PC-9 (cell line): ENCODE measurements at regions of chr11 and their contacts with region 1.

Region 1: GRCh38 chr11:128157423-128158298 is 429.7 kb downstream of the ETS1 start:
- DNase-seq: peak; percentile 50 to 58
- H3K4me3 ChIP-seq: peak overlapping the region; percentile 49; the same call in 1 of the 2 replicates
- H3K27ac ChIP-seq: no peak overlapping the region
- H3K4me1 ChIP-seq: no peaks in the 10 kb centered on the region
- H3K27me3 ChIP-seq: no peaks in the 10 kb centered on the region
- CTCF ChIP-seq: peak; percentile 99

Region 2: DNA sequence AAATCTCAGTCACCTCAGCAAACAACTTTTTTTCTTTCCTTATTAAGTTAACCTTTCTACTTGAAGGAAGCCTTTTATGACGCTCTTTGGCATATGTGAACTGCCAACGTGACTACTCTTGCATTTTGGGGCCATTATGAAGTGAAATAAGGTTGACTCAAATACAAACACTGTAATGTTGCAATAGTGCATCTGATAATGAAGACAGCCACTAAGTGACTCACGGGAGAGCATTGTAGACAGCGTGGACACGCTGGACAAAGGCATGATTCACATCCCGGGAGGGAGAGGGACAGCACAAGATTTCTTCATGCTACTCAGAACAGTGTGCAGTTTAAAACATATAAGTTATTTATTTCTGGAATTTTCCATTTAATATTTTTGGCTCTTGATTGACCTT is 131.1 kb before region 1 on chr11:
- CTCF ChIA-PET with region 1: no interaction called
- POLR2A ChIA-PET with region 1: no interaction called
- intact Hi-C with region 1: loop called (anchors 1 kb)
- DNase-seq: peak; percentile 57 to 83
- H3K4me3 ChIP-seq: no peak overlapping the region
- H3K27ac ChIP-seq: no peak overlapping the region
- H3K4me1 ChIP-seq: peaks cover 8% of the 10 kb centered on the region; the same call in 1 of the 2 replicates
- H3K27me3 ChIP-seq: no peaks in the 10 kb centered on the region
- CTCF ChIP-seq: no peak

Region 3: DNA sequence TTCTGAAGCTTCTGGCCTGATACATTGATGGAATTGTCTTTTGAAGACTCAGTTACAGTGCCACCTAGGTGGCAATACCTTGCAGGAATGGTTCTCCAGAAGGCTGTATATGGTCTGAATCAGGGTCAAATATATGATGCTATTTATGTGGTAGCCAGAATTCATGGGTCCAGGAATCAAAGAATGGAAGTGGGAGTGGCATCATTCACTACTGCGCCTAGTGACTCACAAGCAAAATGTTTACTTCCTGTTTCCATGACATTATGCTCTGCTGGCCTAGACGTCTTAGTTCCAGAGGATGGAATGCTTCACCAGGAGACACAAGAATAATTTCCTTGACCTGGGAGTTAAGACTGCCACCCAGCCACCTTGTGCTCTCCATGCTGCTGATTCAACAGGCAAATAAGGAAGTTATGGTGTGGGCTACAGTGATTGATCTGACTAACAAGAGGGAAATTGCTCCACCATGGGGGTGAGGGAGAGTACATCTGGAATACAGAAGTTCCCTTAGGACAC is 62.1 kb before region 1 on chr11:
- CTCF ChIA-PET with region 1: no interaction called
- POLR2A ChIA-PET with region 1: no interaction called
- intact Hi-C with region 1: no loop called
- DNase-seq: peak; percentile 59 to 78
- H3K4me3 ChIP-seq: no peak overlapping the region
- H3K27ac ChIP-seq: no peak overlapping the region
- H3K4me1 ChIP-seq: no peaks in the 10 kb centered on the region
- H3K27me3 ChIP-seq: no peaks in the 10 kb centered on the region
- CTCF ChIP-seq: no peak

Region 4: GRCh38 chr11:128290106-128290840 is 132.6 kb after region 1 on chr11:
- CTCF ChIA-PET with region 1: no interaction called
- POLR2A ChIA-PET with region 1: no interaction called
- intact Hi-C with region 1: loop called (anchors 5 kb)
- DNase-seq: peak; percentile 45 to 58
- H3K4me3 ChIP-seq: no peak overlapping the region
- H3K27ac ChIP-seq: no peak overlapping the region
- H3K4me1 ChIP-seq: peaks cover 18% of the 10 kb centered on the region
- H3K27me3 ChIP-seq: no peaks in the 10 kb centered on the region
- CTCF ChIP-seq: peak; percentile 93

Region 5: DNA sequence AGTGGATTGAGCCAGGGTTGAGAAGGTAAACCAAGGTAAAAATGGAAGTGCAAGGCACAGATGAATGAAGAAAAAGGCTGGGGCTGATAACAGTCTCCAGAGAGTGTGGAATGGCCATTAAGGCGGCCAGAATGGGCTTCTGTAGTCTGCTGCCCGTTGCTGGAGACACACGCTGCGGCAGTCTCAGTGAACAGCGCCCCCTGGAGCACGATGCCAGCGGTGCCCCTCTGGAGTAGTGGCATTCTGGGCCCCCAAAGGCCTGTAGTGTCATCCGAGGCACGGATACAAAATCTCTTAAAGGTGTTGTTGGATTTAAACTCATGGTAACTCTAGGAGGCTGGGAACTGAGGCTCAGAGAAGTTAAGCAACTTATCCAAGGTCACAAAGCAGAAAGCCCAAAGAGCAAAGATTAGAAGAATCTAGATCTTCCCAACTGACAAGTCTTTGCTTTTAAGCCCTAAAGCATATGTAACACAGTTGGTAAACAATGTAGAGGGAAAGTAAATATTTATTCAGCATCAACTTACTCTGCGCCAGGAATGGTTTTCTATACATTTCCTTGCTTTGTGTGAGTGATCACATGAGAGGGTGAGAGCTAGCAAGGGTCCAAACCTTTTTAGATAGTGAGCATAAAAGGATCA is 691.3 kb after region 1 on chr11:
- CTCF ChIA-PET with region 1: no interaction called
- POLR2A ChIA-PET with region 1: no interaction called
- intact Hi-C with region 1: loop called (anchors 5 kb)
- DNase-seq: peak in 1 of 2 experiments; percentile 46
- H3K4me3 ChIP-seq: no peak overlapping the region
- H3K27ac ChIP-seq: no peak overlapping the region
- H3K4me1 ChIP-seq: no peaks in the 10 kb centered on the region
- H3K27me3 ChIP-seq: peaks cover 15% of the 10 kb centered on the region; the same call in 1 of the 2 replicates
- CTCF ChIP-seq: peak; percentile 72

Region 6: DNA sequence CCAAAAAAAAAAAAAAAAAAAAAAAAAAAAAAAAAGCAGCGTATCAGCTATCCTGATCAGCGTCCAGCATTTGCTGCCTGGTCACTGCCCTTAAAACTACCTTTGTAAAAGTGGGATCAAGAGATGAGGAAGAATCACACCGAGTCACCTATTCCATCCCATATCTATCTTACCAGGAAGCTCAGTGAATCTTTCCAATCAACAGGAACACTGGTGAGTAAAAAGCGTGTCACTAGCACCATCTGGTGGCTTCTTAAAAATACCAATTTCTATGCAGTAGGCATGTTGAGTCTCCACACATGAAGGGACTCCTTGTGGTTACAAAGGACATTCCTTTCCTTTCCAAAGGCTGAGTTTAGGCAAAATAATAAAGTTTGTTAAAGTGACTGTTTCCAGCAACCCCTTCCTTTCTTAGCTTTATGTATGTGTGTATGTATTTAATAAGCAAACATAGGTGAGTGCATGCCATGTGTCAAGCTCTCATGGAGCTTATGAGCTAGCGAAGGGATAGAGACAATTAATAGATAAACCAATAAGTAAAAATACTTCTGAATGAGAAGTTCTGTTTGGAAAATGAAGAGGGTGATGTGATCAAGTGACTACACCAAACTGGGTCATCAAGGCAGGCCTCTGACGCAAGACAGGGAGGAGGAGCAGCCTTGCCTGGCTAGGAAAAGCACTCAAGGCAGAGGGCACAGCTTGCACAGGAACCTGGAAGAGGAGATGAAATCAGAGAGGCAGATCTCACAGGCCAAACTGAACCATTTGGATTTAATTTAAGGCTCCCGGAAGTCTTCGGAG is 798.9 kb after region 1 on chr11:
- CTCF ChIA-PET with region 1: no interaction called
- POLR2A ChIA-PET with region 1: no interaction called
- intact Hi-C with region 1: loop called (anchors 5 kb)
- DNase-seq: peak; percentile 50 to 69
- H3K4me3 ChIP-seq: no peak overlapping the region
- H3K27ac ChIP-seq: no peak overlapping the region
- H3K4me1 ChIP-seq: no peaks in the 10 kb centered on the region
- H3K27me3 ChIP-seq: no peaks in the 10 kb centered on the region
- CTCF ChIP-seq: peak; percentile 82